Endothelial cell of umbilical vein (primary cell): ENCODE measurements at regions of chr3 and their contacts with region 1.

Region 1: DNA sequence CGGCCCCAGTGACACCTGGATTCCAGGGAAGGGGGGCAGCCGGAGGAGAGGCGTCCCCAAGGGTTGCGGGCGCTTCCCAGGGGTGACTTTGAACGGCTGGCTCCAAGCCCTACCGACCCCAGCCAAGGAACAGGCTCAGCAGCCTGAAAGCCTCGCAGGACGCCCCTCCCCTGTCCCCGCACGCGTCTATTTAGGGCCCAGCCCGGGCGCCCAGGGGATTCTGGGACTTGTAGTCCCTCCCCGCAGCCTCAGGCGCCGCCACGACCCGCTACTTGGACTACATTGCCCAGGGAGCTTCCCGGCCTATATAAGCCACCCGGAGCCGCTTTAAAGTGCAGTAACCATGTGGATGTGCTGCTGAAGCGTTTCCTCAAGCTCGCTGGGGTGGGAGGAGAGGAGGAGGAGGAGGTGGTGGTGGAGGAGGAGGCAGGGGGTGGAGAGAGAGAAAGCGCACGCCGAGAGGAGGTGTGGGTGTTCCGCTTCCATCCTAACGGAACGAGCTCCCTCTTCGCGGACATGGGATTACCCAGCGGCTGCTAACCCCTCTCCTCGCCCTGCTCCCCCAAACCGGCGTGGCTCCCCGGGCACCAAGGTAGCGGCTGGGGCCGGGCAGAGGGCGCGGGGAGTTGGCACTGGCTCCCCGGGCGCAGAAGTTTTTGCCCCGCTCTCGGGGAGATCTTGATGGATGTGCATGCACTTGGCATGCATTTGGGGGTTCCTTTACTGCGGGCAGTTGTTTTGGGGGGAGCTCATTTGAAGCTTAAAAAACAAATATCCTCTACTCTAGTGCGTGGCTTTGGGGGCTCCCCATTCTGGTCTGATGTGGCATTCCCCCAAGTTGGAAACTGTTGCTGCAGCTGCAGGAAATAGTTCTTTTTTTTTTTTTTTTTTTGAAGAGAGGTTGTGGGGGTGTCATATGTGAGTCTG is at the start of gene ITPR1:
- DNase-seq: peak; percentile 99
- H3K4me3 ChIP-seq: peak within 1 kb of the TSS; percentile 75 to 88 (median 85)
- H3K27ac ChIP-seq: peak within 1 kb of the TSS; percentile 80
- H3K4me1 ChIP-seq: peaks cover 24% of the 10 kb centered on the region
- H3K27me3 ChIP-seq: peaks cover 0 to 2% of the 10 kb centered on the region in 2 experiments
- CTCF ChIP-seq: no peak
- POLR2A ChIP-seq: peak; percentile 99
- total RNA-seq, gene ITPR1: 16.1 and 18.0 TPM in 2 replicates

Region 2: GRCh38 chr3:3179407-3180094 is 1313.7 kb before region 1 on chr3 and contains the start of gene CRBN:
- CTCF ChIA-PET with region 1: no interaction called
- POLR2A ChIA-PET with region 1: no interaction called
- dilution Hi-C with region 1: no loop called
- intact Hi-C with region 1: loop called (anchors 10 kb)
- DNase-seq: peak; percentile 91
- H3K4me3 ChIP-seq: peak within 1 kb of the TSS; percentile 78 to 99 (median 90)
- H3K27ac ChIP-seq: peak within 1 kb of the TSS; percentile 68
- H3K4me1 ChIP-seq: peaks cover 15% of the 10 kb centered on the region
- H3K27me3 ChIP-seq: no peaks in the 10 kb centered on the region
- CTCF ChIP-seq: peak; percentile 96 to 98
- POLR2A ChIP-seq: peak; percentile 75
- total RNA-seq, gene CRBN: 34.8 and 36.1 TPM in 2 replicates

Region 3: GRCh38 chr3:4394048-4394447 is 99.2 kb before region 1 on chr3:
- CTCF ChIA-PET with region 1: interaction called, 4 read pairs
- POLR2A ChIA-PET with region 1: no interaction called
- dilution Hi-C with region 1: no loop called
- intact Hi-C with region 1: loop called (anchors 1 kb)
- DNase-seq: peak; percentile 84
- H3K4me3 ChIP-seq: no peak overlapping the region
- H3K27ac ChIP-seq: peak overlapping the region; percentile 81
- H3K4me1 ChIP-seq: peaks cover 46% of the 10 kb centered on the region
- H3K27me3 ChIP-seq: no peaks in the 10 kb centered on the region
- CTCF ChIP-seq: no peak
- POLR2A ChIP-seq: no peak

Region 4: GRCh38 chr3:4466741-4467521 is 26.3 kb before region 1 on chr3 and contains the start of gene SUMF1:
- CTCF ChIA-PET with region 1: interaction called, 6 read pairs
- POLR2A ChIA-PET with region 1: interaction called, 23 read pairs
- dilution Hi-C with region 1: no loop called
- intact Hi-C with region 1: loop called (anchors 1 kb)
- DNase-seq: peak; percentile 80
- H3K4me3 ChIP-seq: peak within 1 kb of the TSS; percentile 56 to 86 (median 83)
- H3K27ac ChIP-seq: peak within 1 kb of the TSS; percentile 51
- H3K4me1 ChIP-seq: peaks cover 4% of the 10 kb centered on the region
- H3K27me3 ChIP-seq: peaks cover 0 to 3% of the 10 kb centered on the region in 2 experiments
- CTCF ChIP-seq: no peak
- POLR2A ChIP-seq: peak; percentile 85
- total RNA-seq, gene SUMF1: 26.6 and 31.5 TPM in 2 replicates

Region 5: DNA sequence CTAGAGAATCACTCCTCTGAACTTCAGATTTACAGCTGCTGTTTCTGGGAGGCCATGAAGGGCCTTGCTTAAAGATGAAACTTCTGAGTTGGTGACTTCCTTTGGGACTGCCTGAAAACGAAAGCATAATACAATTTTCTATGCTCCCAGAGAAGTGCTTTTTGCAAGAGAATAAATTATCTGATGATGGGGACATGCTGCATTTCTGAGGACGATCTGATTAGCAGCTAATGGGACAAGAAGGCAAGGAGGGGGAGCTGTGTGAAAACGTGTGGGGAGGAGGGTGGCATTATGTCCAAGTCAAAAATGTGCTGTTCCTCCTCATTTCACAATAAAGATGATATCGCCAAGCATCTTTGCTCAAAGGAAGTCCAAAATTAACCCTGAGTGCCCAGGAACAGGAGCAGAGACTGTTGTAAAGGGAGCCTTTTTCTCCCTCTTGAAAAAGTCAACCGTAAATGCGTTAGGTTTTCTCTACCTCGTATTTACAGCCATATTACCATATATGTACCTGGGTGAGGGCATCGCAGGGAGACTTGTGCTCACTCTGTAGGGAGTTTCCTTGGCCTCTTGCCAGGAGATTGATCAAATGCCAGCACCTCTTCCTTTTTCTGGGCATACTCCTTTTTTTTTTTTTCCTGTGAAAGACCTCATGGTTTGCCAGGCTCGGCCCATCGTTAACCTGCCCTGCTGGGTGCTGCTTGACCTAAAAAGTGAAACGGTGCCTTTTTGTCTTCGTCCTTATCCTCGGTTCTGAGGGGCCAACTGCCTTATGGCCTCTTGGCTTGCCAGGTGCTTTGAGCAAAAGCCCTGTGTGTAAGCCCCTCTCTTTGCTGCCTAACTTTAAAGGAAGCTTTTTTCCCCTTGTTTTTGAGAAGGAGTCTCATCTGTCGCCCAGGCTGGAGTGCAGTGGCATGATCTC is 11.3 kb after region 1 on chr3:
- CTCF ChIA-PET with region 1: interaction called, 4 read pairs
- POLR2A ChIA-PET with region 1: interaction called, 12 read pairs
- dilution Hi-C with region 1: no loop called
- intact Hi-C with region 1: loop called (anchors 1 kb)
- DNase-seq: no peak
- H3K4me3 ChIP-seq: no peak overlapping the region
- H3K27ac ChIP-seq: no peak overlapping the region
- H3K4me1 ChIP-seq: peaks cover 3% of the 10 kb centered on the region
- H3K27me3 ChIP-seq: no peaks in the 10 kb centered on the region
- CTCF ChIP-seq: no peak
- POLR2A ChIP-seq: no peak

Region 6: DNA sequence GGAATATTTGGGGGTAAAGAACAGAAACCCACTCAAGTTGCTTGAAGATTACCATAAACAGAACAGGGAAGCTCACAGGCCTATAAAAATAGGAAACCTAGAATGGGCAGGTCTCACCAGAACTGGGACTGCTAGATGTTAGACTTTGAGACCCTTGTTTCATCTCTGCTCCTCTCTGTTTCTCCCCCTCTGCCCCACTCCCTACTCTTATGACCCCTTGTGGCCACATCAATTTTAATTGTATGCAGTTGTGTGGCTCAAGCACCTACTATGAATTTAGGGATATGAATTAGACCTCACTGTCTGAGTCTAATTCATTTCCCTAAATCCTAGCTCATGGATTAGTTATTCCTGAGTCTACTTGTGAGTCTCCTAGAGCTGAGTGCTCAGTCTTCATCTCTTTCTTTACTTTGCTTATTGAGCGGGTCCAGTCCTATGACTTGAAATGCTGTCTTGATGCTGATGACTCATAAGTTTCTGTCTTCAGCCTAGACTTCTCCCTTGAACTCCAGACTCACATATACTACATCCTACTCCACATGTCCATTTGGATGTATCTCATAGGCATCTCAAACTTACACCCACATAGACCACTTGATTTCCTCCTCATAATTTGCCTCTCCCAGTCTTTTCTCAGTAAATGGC is 78.5 kb after region 1 on chr3:
- CTCF ChIA-PET with region 1: interaction called, 5 read pairs
- POLR2A ChIA-PET with region 1: interaction called, 3 read pairs
- dilution Hi-C with region 1: no loop called
- intact Hi-C with region 1: loop called (anchors 1 kb)
- DNase-seq: peak; percentile 44
- H3K4me3 ChIP-seq: no peak overlapping the region
- H3K27ac ChIP-seq: no peak overlapping the region
- H3K4me1 ChIP-seq: no peaks in the 10 kb centered on the region
- H3K27me3 ChIP-seq: no peaks in the 10 kb centered on the region
- CTCF ChIP-seq: peak; percentile 11 to 21
- POLR2A ChIP-seq: no peak

Region 7: GRCh38 chr3:4633078-4634004 is 140.1 kb after region 1 on chr3:
- CTCF ChIA-PET with region 1: interaction called, 38 read pairs
- POLR2A ChIA-PET with region 1: interaction called, 6 read pairs
- dilution Hi-C with region 1: no loop called
- intact Hi-C with region 1: loop called (anchors 1 kb)
- DNase-seq: peak; percentile 72
- H3K4me3 ChIP-seq: no peak overlapping the region
- H3K27ac ChIP-seq: no peak overlapping the region
- H3K4me1 ChIP-seq: no peaks in the 10 kb centered on the region
- H3K27me3 ChIP-seq: no peaks in the 10 kb centered on the region
- CTCF ChIP-seq: peak; percentile 67 to 69
- POLR2A ChIP-seq: no peak

Region 8: GRCh38 chr3:4772171-4772804 is 279.0 kb after region 1 on chr3:
- CTCF ChIA-PET with region 1: no interaction called
- POLR2A ChIA-PET with region 1: no interaction called
- dilution Hi-C with region 1: no loop called
- intact Hi-C with region 1: no loop called
- DNase-seq: peak; percentile 95
- H3K4me3 ChIP-seq: no peak overlapping the region
- H3K27ac ChIP-seq: no peak overlapping the region
- H3K4me1 ChIP-seq: peaks cover 4% of the 10 kb centered on the region
- H3K27me3 ChIP-seq: no peaks in the 10 kb centered on the region
- CTCF ChIP-seq: no peak
- POLR2A ChIP-seq: no peak